HepG2 (cell line): ENCODE measurements at regions of chr20 and their contacts with region 1.

Region 1: GRCh38 chr20:354298-355064 is 7.6 kb downstream of the NRSN2 start:
- DNase-seq: peak; percentile 87
- ATAC-seq: peak; percentile 92
- H3K4me3 ChIP-seq: no peak overlapping the region
- H3K27ac ChIP-seq: no peak overlapping the region
- H3K4me1 ChIP-seq: peaks cover 14% of the 10 kb centered on the region
- H3K27me3 ChIP-seq: no peaks in the 10 kb centered on the region
- CTCF ChIP-seq: peak; percentile 99
- EP300 ChIP-seq: no peak
- POLR2A ChIP-seq: peak in 1 of 2 experiments; percentile 27; a peak in 1 of 4 replicates
- RAD21 ChIP-seq: peak; percentile 100

Region 2: DNA sequence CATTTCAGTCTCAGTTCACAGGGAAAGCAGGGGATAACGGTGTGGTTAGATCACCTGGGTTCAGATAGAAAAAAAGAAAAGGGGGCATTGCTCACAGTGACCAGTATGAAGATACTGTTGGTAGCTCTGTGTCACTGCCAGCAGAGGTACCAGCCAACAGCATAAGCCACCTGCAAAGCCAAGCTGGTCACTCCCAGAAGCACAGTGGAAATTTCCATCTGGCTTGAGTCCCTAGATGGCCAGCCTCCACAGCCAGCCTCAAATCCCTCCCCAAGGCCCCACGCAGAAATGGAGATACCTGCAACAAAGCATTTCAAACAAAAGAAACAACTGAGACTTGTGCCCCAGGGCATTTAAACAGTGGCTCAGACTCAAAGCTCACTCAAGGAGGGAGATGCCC is 185.6 kb before region 1 on chr20:
- CTCF ChIA-PET with region 1: no interaction called
- POLR2A ChIA-PET with region 1: no interaction called
- in situ Hi-C with region 1: no loop called
- intact Hi-C with region 1: no loop called
- DNase-seq: no peak
- ATAC-seq: no peak
- H3K4me3 ChIP-seq: no peak overlapping the region
- H3K27ac ChIP-seq: no peak overlapping the region
- H3K4me1 ChIP-seq: no peaks in the 10 kb centered on the region
- H3K27me3 ChIP-seq: peaks cover 1 to 2% of the 10 kb centered on the region in 2 experiments; a peak in 3 of 5 replicates
- CTCF ChIP-seq: no peak
- EP300 ChIP-seq: no peak
- POLR2A ChIP-seq: no peak
- RAD21 ChIP-seq: no peak

Region 3: GRCh38 chr20:381581-382290 is 27.3 kb after region 1 on chr20:
- CTCF ChIA-PET with region 1: no interaction called
- POLR2A ChIA-PET with region 1: interaction called, 1,587 read pairs
- in situ Hi-C with region 1: no loop called
- intact Hi-C with region 1: no loop called
- DNase-seq: peak; percentile 85
- ATAC-seq: peak; percentile 69
- H3K4me3 ChIP-seq: peak overlapping the region; percentile 93 to 98 (median 97)
- H3K27ac ChIP-seq: peak overlapping the region; percentile 93
- H3K4me1 ChIP-seq: peaks cover 74% of the 10 kb centered on the region
- H3K27me3 ChIP-seq: no peaks in the 10 kb centered on the region; a peak in 1 of 5 replicates
- CTCF ChIP-seq: no peak; the same call in 1 of the 2 replicates
- EP300 ChIP-seq: 0 out of 4 replicates have a peak, but pooled peaks of 1 of the 2 experiments have one; percentile 37
- POLR2A ChIP-seq: peak; percentile 90
- RAD21 ChIP-seq: peak; percentile 72

Region 4: GRCh38 chr20:478949-479429 is 124.5 kb after region 1 on chr20:
- CTCF ChIA-PET with region 1: interaction called, 19 read pairs
- POLR2A ChIA-PET with region 1: interaction called, 3 read pairs
- in situ Hi-C with region 1: loop called (anchors 5 kb)
- intact Hi-C with region 1: loop called (anchors 1 kb)
- DNase-seq: peak; percentile 84
- ATAC-seq: peak; percentile 60
- H3K4me3 ChIP-seq: no peak overlapping the region
- H3K27ac ChIP-seq: no peak overlapping the region
- H3K4me1 ChIP-seq: peaks cover 56% of the 10 kb centered on the region
- H3K27me3 ChIP-seq: no peaks in the 10 kb centered on the region
- CTCF ChIP-seq: peak; percentile 81
- EP300 ChIP-seq: 0 out of 4 replicates have a peak, but pooled peaks of 1 of the 2 experiments have one; percentile 25
- POLR2A ChIP-seq: no peak
- RAD21 ChIP-seq: peak; percentile 82

Region 5: DNA sequence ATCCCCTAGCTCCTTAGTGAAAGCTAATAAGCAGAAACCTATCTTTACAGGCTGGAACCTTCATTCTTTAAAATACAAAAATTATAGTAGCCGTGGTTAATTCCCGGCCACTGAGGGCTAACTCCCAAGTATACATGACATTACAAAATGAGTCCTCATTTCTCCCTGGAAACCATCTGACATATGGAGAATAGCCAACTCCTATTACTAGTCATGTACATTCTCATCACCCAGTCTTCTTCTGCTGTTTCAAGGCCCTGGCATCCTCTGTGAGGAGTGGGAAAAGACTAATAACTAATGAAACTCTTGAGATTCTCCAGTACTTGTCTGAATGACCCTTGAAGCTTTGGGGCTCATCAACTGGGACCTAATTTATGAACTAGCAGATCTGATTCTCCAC is 158.9 kb after region 1 on chr20:
- CTCF ChIA-PET with region 1: no interaction called
- POLR2A ChIA-PET with region 1: no interaction called
- in situ Hi-C with region 1: no loop called
- intact Hi-C with region 1: loop called (anchors 1 kb)
- DNase-seq: no peak
- ATAC-seq: no peak
- H3K4me3 ChIP-seq: no peak overlapping the region
- H3K27ac ChIP-seq: no peak overlapping the region
- H3K4me1 ChIP-seq: peaks cover 91% of the 10 kb centered on the region
- H3K27me3 ChIP-seq: no peaks in the 10 kb centered on the region
- CTCF ChIP-seq: no peak
- EP300 ChIP-seq: no peak
- POLR2A ChIP-seq: no peak
- RAD21 ChIP-seq: no peak

Region 6: GRCh38 chr20:733861-734260 is 379.4 kb after region 1 on chr20:
- CTCF ChIA-PET with region 1: no interaction called
- POLR2A ChIA-PET with region 1: no interaction called
- in situ Hi-C with region 1: loop called (anchors 10 kb)
- intact Hi-C with region 1: no loop called
- DNase-seq: no peak
- ATAC-seq: no peak
- H3K4me3 ChIP-seq: no peak overlapping the region
- H3K27ac ChIP-seq: no peak overlapping the region
- H3K4me1 ChIP-seq: peaks cover 3% of the 10 kb centered on the region; the same call in 1 of the 2 replicates
- H3K27me3 ChIP-seq: peaks cover 3 to 26% of the 10 kb centered on the region in 2 experiments
- CTCF ChIP-seq: no peak
- EP300 ChIP-seq: no peak
- POLR2A ChIP-seq: no peak
- RAD21 ChIP-seq: no peak

Region 7: GRCh38 chr20:967796-968742 is 613.6 kb after region 1 on chr20:
- CTCF ChIA-PET with region 1: no interaction called
- POLR2A ChIA-PET with region 1: no interaction called
- in situ Hi-C with region 1: no loop called
- intact Hi-C with region 1: no loop called
- DNase-seq: peak; percentile 58
- ATAC-seq: no peak; the same call in 2 of the 3 replicates
- H3K4me3 ChIP-seq: no peak overlapping the region
- H3K27ac ChIP-seq: no peak overlapping the region
- H3K4me1 ChIP-seq: no peaks in the 10 kb centered on the region
- H3K27me3 ChIP-seq: peaks cover 10 to 47% of the 10 kb centered on the region in 2 experiments; a peak in 4 of 5 replicates
- CTCF ChIP-seq: no peak
- EP300 ChIP-seq: no peak
- POLR2A ChIP-seq: no peak
- RAD21 ChIP-seq: no peak